ENCODE measurements at regions of chr1 and their contacts with region 1.

Region 1: DNA sequence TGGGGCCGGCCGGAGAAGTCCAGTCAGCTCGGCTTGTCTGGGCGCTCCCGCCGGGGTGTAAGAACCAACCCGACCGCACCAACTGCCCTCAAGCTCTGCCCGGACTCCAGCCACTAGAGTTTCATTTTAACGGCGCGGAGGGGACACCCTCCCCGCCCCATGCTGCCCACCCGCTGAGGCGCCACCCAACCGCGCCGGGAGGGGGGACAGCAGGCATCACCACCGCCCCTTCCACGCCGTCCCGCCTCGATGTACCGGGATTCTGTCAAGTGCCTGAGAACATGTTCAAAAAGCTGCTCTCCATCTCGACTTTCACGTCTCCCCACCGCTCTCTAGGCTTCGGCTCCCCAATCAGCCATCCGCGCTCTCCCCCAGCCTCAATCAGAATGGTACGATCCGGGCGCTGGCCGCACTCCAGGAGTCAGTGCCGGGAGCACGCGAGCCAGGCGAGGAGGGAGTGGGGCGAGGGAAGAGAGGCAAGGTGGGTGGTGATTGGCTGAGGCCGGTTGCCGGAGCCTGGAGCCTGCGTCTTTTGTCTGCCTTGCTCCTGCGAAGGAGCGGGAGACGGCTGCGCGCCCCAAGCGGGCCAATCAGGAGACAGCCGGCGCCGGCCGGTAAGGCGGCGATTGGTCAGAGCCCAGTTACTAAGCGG is at the start of gene PIK3R3:
- DNase-seq: peak; percentile 98
- H3K4me3 ChIP-seq: peak within 1 kb of the TSS; percentile 49 to 63
- H3K27ac ChIP-seq: peak within 1 kb of the TSS; percentile 87
- H3K4me1 ChIP-seq: no peaks in the 10 kb centered on the region
- H3K27me3 ChIP-seq: no peaks in the 10 kb centered on the region
- CTCF ChIP-seq: peak in 2 of 4 experiments; percentile 26 to 50
- POLR2A ChIP-seq: peak; percentile 94
- total RNA-seq, gene PIK3R3: 9.1 to 26.5 TPM

Region 2: DNA sequence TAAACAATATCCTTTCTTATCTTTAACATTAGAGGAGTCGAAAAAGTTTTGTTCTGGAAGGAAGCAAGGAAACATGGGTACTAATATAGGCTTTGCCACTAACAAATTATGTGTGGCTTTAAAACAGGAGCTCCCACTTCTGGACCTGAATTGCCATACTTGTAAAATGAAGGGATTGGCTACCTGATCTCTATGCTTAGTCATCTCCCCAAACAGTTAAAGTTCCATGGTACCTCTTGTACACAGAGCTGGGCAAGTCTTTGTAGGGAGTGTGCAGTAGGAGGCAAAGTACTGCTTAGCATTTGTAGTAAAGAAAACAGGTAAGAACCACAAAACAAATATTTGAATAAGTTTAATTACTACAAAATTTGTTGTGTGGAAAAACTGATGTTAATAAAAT is 248.0 kb before region 1 on chr1:
- intact Hi-C with region 1: loop called (anchors 5 kb)
- DNase-seq: peak; percentile 9
- H3K4me3 ChIP-seq: no peak overlapping the region
- H3K27ac ChIP-seq: no peak overlapping the region
- H3K4me1 ChIP-seq: no peaks in the 10 kb centered on the region
- H3K27me3 ChIP-seq: no peaks in the 10 kb centered on the region
- CTCF ChIP-seq: no peak
- POLR2A ChIP-seq: no peak

Region 3: DNA sequence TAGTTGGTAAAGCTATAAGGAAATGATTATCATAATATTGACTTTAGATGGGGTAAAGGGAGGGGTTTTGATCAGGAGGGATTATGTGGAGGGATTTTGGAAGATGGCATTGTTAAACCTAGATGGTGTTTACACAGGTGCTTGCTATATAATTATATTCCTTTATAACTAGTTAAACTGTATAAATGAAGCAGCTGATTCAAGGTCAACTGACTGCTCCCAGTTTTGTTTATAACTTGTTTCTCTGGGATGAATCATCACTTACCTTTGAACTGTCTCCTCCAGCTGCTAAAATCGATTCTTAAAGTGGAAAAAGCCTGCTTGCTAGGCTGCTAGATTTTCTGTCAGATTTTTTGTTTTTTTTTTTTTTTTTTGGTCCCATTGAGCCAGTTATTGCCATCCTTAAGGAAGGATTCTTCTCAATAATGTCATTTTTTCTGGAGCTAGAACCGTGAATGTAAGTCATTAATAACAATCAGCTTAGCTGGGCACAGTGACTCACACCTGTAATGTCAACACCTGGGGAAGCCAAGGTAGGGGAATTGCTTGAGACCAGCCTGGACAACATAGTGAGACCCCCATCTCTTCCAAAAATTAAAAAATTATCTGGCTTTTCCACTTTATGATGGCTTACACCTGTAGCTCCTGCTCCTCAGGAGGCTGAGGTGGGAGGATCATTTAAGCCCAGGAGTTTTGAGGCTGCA is 153.4 kb before region 1 on chr1:
- intact Hi-C with region 1: loop called (anchors 10 kb)
- DNase-seq: no peak
- H3K4me3 ChIP-seq: no peak overlapping the region
- H3K27ac ChIP-seq: peak overlapping the region; percentile 20 to 54
- H3K4me1 ChIP-seq: peaks cover 2% of the 10 kb centered on the region
- H3K27me3 ChIP-seq: no peaks in the 10 kb centered on the region
- CTCF ChIP-seq: no peak
- POLR2A ChIP-seq: no peak

Region 4: DNA sequence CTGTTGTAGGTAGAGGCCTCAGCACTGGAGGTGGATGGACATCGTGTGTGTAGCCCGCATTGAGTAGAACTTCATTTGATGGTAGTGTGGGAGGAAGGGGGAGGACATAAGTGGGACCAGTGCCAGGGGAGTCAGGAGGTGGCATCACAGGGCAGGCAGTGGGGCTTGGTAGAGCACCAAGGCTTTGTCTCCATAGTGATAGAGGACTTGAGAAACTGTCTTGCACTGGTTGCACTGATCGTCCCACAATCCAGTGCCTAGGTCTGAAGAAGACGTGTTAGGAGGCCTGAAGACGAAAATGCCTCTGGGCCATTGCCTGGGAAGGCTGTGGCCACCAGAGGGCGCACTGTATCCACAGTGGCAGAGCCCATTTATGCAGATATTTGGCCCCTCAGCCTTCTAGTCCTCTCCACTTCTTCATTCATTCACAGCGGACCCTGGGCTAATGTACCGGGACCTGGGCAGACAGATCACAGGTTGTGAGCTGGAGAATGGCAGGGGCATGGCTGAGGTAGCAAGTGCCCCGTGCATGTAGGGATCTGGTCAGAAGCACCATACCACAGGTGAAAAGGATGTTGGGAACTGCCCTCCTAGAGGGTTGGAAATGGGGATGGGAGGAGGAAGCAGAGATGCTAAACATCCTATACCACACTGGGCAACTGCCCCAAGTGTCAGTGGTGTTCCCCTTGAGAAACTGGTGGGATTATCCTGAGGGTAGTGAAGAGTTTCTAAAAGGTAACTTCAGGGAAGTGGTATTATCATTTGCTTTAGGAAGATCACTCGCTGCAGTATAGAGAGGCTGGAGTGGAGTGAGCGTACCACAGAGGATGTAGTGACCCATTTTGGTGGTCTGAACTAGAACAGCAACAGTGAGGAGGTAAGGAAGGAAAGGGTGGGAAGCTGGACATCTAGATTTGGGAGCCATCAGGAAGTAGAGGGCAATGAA is 95.5 kb before region 1 on chr1:
- intact Hi-C with region 1: loop called (anchors 5 kb)
- DNase-seq: peak; percentile 86
- H3K4me3 ChIP-seq: no peak overlapping the region
- H3K27ac ChIP-seq: no peak overlapping the region
- H3K4me1 ChIP-seq: no peaks in the 10 kb centered on the region
- H3K27me3 ChIP-seq: no peaks in the 10 kb centered on the region
- CTCF ChIP-seq: peak; percentile 94 to 99 (median 98)
- POLR2A ChIP-seq: no peak

Region 5: GRCh38 chr1:46352363-46352762 is 219.7 kb after region 1 on chr1:
- intact Hi-C with region 1: no loop called
- DNase-seq: no peak
- H3K4me3 ChIP-seq: no peak overlapping the region
- H3K27ac ChIP-seq: no peak overlapping the region
- H3K4me1 ChIP-seq: no peaks in the 10 kb centered on the region
- H3K27me3 ChIP-seq: no peaks in the 10 kb centered on the region
- CTCF ChIP-seq: no peak
- POLR2A ChIP-seq: no peak